Activated CD4-positive, alpha-beta T cell treated with anti-CD3 and anti-CD28 coated beads for 36 hours (primary cell): ENCODE measurements at regions of chr15 and their contacts with region 1.

Region 1: DNA sequence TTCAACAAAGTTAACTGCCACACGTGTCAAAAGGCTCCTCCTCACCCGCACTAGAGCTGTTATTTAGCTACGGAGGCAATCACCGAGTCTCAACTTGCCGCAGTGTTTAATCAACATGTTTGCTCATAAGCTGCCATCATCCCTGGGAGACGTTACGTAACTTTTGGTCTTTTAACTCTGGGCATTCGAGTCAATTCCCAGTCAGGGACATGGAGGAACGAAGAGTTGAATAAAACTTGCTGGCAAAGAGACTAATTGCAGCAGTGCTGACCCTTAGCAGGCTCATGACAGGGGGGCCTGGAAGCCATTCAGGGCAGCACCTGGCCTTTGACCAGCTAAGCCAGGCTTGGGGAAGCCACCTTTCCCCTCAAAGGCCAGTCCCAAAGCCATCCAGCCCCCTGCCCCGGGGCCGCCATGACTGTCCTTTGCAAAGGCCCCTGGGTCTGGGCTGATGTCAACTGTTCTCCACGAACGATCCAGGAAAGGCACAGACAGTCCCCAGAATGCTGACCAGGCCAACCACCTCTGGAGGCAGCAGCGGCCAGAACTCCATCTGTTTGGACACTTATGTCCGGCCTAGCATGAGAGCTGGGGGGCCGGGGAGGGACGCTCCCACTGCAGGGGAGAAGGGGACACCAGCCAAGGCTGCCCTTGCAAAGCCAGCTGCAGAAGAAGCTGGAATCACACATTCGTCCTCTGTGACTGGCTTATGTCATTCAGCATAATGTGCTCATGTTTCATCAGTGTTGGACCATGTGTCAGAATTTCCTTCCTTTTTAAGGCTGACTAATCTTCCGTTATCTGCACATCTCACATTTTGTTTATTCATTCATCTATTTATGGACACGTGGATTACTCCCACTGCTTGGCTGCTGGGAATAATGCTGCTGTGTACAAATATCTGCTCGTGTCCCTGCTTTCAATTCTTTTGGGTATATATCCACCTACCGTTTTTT is 43.7 kb downstream of the PCSK6 start:
- DNase-seq: no peak
- ATAC-seq: peak; percentile 38
- H3K4me3 Mint-ChIP-seq: no peak overlapping the region
- H3K27ac Mint-ChIP-seq: no peak overlapping the region
- H3K4me1 Mint-ChIP-seq: peaks cover 2% of the 10 kb centered on the region
- H3K27me3 Mint-ChIP-seq: peaks cover 16% of the 10 kb centered on the region

Region 2: GRCh38 chr15:101188637-101189408 is 257.0 kb before region 1 on chr15:
- CTCF ChIA-PET with region 1: no interaction called
- POLR2A ChIA-PET with region 1: no interaction called
- intact Hi-C with region 1: no loop called
- DNase-seq: no peak
- ATAC-seq: peak; percentile 70
- H3K4me3 Mint-ChIP-seq: peak overlapping the region; percentile 40
- H3K27ac Mint-ChIP-seq: peak overlapping the region; percentile 84
- H3K4me1 Mint-ChIP-seq: peaks cover 85% of the 10 kb centered on the region
- H3K27me3 Mint-ChIP-seq: no peaks in the 10 kb centered on the region

Region 3: GRCh38 chr15:101489236-101489632 is 43.4 kb after region 1 on chr15:
- CTCF ChIA-PET with region 1: no interaction called
- POLR2A ChIA-PET with region 1: no interaction called
- intact Hi-C with region 1: no loop called
- DNase-seq: peak; percentile 53
- ATAC-seq: peak; percentile 80
- H3K4me3 Mint-ChIP-seq: no peak overlapping the region
- H3K27ac Mint-ChIP-seq: no peak overlapping the region
- H3K4me1 Mint-ChIP-seq: peaks cover 4% of the 10 kb centered on the region
- H3K27me3 Mint-ChIP-seq: peaks cover 30% of the 10 kb centered on the region

Region 4: DNA sequence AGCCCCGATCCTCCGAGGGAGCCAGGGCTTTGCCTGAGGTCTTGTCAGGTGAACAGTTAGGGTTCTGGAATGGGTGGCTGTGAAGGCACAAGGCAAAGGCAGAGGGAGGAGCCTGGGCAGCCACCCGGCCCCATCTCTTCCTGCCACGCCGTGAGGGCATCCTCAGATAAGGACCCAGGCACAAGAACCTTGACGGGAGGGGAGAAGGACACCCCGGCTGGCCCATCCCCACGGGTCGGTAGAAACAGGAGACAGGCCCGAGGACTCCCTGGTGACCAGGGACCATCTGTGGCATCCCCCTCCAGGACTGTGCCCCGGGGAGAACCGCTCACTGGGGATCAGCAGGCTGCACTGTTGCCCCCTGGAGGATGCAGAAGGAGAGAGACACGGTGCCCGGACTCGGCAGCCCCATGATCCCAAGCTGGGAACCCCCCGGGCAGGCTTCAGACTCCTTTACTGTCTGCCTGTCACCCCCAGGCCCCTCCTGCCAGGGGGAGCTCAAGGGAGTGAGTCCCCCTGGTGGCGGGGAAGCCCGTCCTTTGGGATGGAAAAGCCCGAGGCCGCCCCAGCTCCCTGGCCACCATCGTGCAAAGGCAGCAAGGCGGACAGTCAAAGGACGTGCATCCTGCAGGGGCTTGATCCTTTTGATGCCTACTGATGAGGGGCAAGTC is 56.0 kb after region 1 on chr15:
- CTCF ChIA-PET with region 1: no interaction called
- POLR2A ChIA-PET with region 1: no interaction called
- intact Hi-C with region 1: loop called in 1 of 2 experiments (anchors 10 kb)
- DNase-seq: peak; percentile 75
- ATAC-seq: peak; percentile 94
- H3K4me3 Mint-ChIP-seq: peak overlapping the region; percentile 21
- H3K27ac Mint-ChIP-seq: no peak overlapping the region
- H3K4me1 Mint-ChIP-seq: peaks cover 14% of the 10 kb centered on the region
- H3K27me3 Mint-ChIP-seq: peaks cover 21% of the 10 kb centered on the region